IMR-90 (cell line): ENCODE measurements at regions of chr6 and their contacts with region 1.

Region 1: GRCh38 chr6:26342106-26343004 is 22.6 kb upstream of the BTN3A2 start:
- DNase-seq: peak; percentile 55
- ATAC-seq: peak; percentile 30; the same call in 1 of the 2 replicates
- H3K4me3 ChIP-seq: peak overlapping the region; percentile 21; the same call in 1 of the 2 replicates
- H3K27ac ChIP-seq: no peak overlapping the region
- H3K4me1 ChIP-seq: no peaks in the 10 kb centered on the region
- H3K27me3 ChIP-seq: no peaks in the 10 kb centered on the region
- CTCF ChIP-seq: no peak
- POLR2A ChIP-seq: no peak
- RAD21 ChIP-seq: no peak

Region 2: DNA sequence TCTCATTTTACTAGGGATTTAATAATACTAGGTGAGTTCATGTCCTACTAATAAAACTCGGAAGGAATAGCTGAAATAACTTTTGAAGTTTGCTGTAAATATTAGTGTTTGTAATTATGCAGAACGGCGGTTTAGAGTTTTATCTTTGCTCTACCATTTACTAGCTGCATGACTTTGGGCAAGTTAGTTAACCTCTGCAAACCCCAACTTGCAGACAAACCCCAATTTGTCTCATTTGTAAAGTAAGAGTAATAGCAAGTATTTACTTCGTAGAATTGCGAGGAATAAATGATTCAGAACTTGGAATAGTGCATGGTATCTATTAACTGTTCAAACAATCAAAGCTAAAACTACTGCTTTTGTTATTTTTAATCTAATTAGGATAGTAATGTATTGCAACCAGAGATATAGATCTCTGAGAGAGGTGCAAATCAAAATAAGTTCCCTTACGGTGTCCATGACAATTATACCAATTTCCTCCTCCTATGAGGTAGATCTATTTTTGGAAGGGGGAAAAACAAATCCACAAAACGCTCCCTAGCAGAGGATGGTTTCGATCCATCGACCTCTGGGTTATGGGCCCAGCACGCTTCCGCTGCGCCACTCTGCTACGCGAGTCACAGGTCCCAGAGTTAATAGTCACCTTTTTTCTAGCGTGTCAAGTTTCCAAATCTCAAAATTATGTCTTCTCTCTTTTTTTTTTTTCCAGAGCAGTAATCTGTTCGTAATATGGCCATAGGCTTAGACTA is 12.4 kb before region 1 on chr6:
- CTCF ChIA-PET with region 1: interaction called, 10 read pairs
- POLR2A ChIA-PET with region 1: no interaction called
- dilution Hi-C with region 1: no loop called
- in situ Hi-C with region 1: no loop called
- intact Hi-C with region 1: no loop called
- DNase-seq: peak; percentile 68
- ATAC-seq: 0 out of 2 replicates have a peak, but pooled peaks have one; percentile 19
- H3K4me3 ChIP-seq: no peak overlapping the region
- H3K27ac ChIP-seq: no peak overlapping the region
- H3K4me1 ChIP-seq: 0 out of 2 replicates have a peak, but pooled peaks cover 2% of the 10 kb centered on the region
- H3K27me3 ChIP-seq: no peaks in the 10 kb centered on the region
- CTCF ChIP-seq: no peak
- POLR2A ChIP-seq: no peak
- RAD21 ChIP-seq: no peak

Region 3: GRCh38 chr6:26421259-26422144 is 79.1 kb after region 1 on chr6:
- CTCF ChIA-PET with region 1: interaction called, 3 read pairs
- POLR2A ChIA-PET with region 1: no interaction called
- dilution Hi-C with region 1: no loop called
- in situ Hi-C with region 1: no loop called
- intact Hi-C with region 1: loop called (anchors 5 kb)
- DNase-seq: peak; percentile 92
- ATAC-seq: peak; percentile 99
- H3K4me3 ChIP-seq: peak overlapping the region; percentile 81
- H3K27ac ChIP-seq: peak overlapping the region; percentile 95
- H3K4me1 ChIP-seq: peaks cover 5% of the 10 kb centered on the region
- H3K27me3 ChIP-seq: no peaks in the 10 kb centered on the region
- CTCF ChIP-seq: no peak
- POLR2A ChIP-seq: no peak
- RAD21 ChIP-seq: no peak

Region 4: GRCh38 chr6:26532699-26533531 is 190.6 kb after region 1 on chr6:
- CTCF ChIA-PET with region 1: interaction called, 3 read pairs
- POLR2A ChIA-PET with region 1: no interaction called
- dilution Hi-C with region 1: no loop called
- in situ Hi-C with region 1: no loop called
- intact Hi-C with region 1: loop called (anchors 2 kb)
- DNase-seq: peak; percentile 89
- ATAC-seq: peak; percentile 72
- H3K4me3 ChIP-seq: peak overlapping the region; percentile 81
- H3K27ac ChIP-seq: peak overlapping the region; percentile 80
- H3K4me1 ChIP-seq: peaks cover 2% of the 10 kb centered on the region; the same call in 1 of the 2 replicates
- H3K27me3 ChIP-seq: no peaks in the 10 kb centered on the region
- CTCF ChIP-seq: no peak
- POLR2A ChIP-seq: no peak
- RAD21 ChIP-seq: no peak

Region 5: DNA sequence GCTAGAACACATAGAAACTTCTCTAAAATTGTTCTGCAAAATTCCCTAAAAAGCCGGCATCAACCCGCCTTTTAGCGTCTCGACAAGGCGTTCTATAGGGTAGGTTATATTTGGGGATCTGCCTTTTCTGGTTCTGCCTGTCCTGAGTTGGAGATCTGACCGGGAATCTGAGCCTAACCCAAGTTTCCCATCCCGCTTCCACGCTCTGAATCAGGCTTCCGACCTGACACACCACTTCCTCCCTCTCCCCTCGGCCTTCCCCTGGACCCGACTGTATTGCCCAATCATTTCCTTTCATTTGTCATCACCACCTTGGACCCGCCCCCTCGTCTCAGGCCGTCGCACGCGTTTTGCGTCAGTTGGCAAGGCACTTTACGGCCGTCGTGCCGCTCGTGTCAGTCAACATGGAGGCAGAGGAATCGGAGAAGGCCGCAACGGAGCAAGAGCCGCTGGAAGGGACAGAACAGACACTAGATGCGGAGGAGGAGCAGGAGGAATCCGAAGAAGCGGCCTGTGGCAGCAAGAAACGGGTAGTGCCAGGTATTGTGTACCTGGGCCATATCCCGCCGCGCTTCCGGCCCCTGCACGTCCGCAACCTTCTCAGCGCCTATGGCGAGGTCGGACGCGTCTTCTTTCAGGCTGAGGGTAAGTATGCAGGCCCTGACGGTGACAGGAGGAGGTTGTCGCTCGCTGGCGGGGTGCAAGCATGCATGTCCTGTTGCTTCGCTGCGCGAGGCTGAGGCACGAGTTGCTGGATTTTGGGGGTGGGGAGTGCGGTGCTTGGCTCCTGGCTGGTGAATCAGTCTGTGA is 254.4 kb after region 1 on chr6 and contains the start of gene ABT1:
- CTCF ChIA-PET with region 1: interaction called, 14 read pairs
- POLR2A ChIA-PET with region 1: no interaction called
- dilution Hi-C with region 1: no loop called
- in situ Hi-C with region 1: no loop called
- intact Hi-C with region 1: loop called (anchors 1 kb)
- DNase-seq: peak; percentile 98
- ATAC-seq: peak; percentile 83
- H3K4me3 ChIP-seq: peak within 1 kb of the TSS; percentile 91
- H3K27ac ChIP-seq: peak within 1 kb of the TSS; percentile 85
- H3K4me1 ChIP-seq: peaks cover 3% of the 10 kb centered on the region; the same call in 1 of the 2 replicates
- H3K27me3 ChIP-seq: no peaks in the 10 kb centered on the region
- CTCF ChIP-seq: no peak
- POLR2A ChIP-seq: peak; percentile 71; the same call in 1 of the 2 replicates
- RAD21 ChIP-seq: no peak
- total RNA-seq, gene ABT1: 12.2 and 15.4 TPM in 2 replicates